ENCODE measurements at regions of chr12 and their contacts with region 1.

Region 1: GRCh38 chr12:21501379-21501956 is at the starts of genes GOLT1B and RECQL:
- DNase-seq: peak; percentile 98
- H3K4me3 ChIP-seq: peak within 1 kb of the TSS; percentile 84 to 92 (median 88)
- H3K27ac ChIP-seq: peak within 1 kb of the TSS; percentile 84 to 89 (median 85)
- H3K4me1 ChIP-seq: peaks cover 0 to 45% (median 38%) of the 10 kb centered on the region in 4 donors
- H3K27me3 ChIP-seq: no peaks in the 10 kb centered on the region
- CTCF ChIP-seq: no peak
- EP300 ChIP-seq: no peak
- POLR2A ChIP-seq: peak in 1 of 2 donors; percentile 24
- total RNA-seq, gene GOLT1B: 22.5 to 26.9 (median 25.3) TPM
- total RNA-seq, gene RECQL: 30.8 to 44.6 (median 37.1) TPM

Region 2: DNA sequence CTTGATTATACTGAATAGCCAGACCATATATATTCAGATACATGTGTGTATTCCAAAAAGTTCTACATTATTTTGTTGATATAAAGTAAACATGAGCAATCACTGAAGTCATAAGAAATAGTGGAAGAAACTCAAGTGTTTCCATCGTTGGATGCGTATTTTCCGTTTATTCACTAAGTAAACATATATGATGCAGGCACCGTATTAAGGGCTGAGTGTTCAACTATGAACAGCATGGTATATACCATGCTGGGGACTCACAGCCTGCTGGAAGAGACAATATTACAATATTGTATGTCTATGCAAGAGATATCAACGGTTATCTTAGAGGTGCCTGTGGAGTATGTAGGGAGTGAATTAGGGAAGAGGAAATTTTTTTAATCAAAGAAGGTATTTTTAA is 62.8 kb before region 1 on chr12:
- intact Hi-C with region 1: loop called (anchors 5 kb)
- DNase-seq: no peak
- H3K4me3 ChIP-seq: peak overlapping the region; percentile 63 to 69 (median 64)
- H3K27ac ChIP-seq: peak overlapping the region in 3 of 4 donors; percentile 83 to 85 (median 84)
- H3K4me1 ChIP-seq: peaks cover 0 to 16% (median 7%) of the 10 kb centered on the region in 4 donors
- H3K27me3 ChIP-seq: no peaks in the 10 kb centered on the region
- CTCF ChIP-seq: no peak
- EP300 ChIP-seq: no peak
- POLR2A ChIP-seq: no peak

Region 3: DNA sequence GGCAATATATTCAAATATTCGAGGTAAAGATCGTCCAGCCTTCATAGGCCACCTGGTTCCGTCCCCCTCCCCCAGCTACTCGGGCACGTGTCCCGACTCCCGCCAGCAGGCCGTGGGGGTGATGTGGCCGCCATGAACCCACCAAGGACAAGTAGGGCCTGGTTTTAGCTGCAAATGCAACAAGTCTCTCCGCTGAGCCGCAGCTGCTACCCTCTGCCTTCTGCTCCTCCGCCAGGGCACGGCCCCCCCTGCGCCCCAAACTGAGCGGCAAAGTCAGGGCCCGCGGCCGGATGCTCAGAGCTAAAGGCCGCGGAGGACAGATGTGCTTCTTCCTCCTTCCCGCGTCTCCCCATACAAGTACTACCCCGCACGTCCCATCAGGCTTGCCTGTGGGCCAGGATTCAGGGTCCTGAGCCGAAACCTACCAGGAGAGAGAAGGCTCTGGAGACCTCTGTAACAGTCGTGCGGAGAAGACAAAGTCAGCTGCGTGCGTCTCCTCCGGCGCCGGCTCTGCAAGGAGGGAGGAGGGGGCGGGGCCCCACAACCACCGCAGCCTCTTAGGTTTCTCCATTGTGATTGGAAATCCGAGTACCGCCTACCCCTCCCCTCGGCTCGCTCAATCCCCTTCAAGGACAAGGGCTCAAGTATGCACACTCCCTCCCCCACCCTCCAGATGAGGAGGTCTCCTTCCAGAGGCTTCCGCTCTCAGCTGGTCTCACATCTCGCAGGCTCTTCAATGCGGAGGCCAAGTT is 156.0 kb after region 1 on chr12 and contains the start of gene LDHB:
- intact Hi-C with region 1: loop called (anchors 5 kb)
- DNase-seq: peak; percentile 99
- H3K4me3 ChIP-seq: peak within 1 kb of the TSS; percentile 69 to 88 (median 78)
- H3K27ac ChIP-seq: peak within 1 kb of the TSS; percentile 94 to 97 (median 95)
- H3K4me1 ChIP-seq: peaks cover 0 to 36% (median 9%) of the 10 kb centered on the region in 4 donors
- H3K27me3 ChIP-seq: no peaks in the 10 kb centered on the region
- CTCF ChIP-seq: no peak
- EP300 ChIP-seq: no peak
- POLR2A ChIP-seq: peak; percentile 97 to 98
- total RNA-seq, gene LDHB: 355 to 424 (median 379) TPM

Region 4: DNA sequence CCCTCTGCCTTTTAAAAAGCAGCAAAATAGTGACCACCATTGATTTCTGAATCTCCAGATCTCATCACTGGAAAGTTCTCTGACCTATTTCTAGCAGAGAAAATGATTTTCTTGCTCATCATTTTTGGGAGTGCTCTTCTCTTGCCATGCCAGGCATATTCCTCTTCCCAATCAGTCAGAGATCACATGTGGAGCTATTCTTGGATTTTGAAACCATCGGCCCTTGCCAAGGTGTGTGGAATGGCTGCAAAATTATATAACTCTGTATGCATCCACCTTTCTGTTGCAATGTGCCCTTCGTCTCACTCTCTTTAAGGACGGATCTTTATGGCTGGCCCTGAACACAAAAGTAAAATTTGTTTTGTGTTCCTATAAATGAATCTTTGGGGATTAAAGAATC is 181.6 kb after region 1 on chr12:
- intact Hi-C with region 1: loop called (anchors 5 kb)
- DNase-seq: no peak
- H3K4me3 ChIP-seq: no peak overlapping the region
- H3K27ac ChIP-seq: no peak overlapping the region
- H3K4me1 ChIP-seq: peaks cover 0 to 6% (median 3%) of the 10 kb centered on the region in 4 donors
- H3K27me3 ChIP-seq: no peaks in the 10 kb centered on the region
- CTCF ChIP-seq: no peak
- EP300 ChIP-seq: no peak
- POLR2A ChIP-seq: no peak

Region 5: DNA sequence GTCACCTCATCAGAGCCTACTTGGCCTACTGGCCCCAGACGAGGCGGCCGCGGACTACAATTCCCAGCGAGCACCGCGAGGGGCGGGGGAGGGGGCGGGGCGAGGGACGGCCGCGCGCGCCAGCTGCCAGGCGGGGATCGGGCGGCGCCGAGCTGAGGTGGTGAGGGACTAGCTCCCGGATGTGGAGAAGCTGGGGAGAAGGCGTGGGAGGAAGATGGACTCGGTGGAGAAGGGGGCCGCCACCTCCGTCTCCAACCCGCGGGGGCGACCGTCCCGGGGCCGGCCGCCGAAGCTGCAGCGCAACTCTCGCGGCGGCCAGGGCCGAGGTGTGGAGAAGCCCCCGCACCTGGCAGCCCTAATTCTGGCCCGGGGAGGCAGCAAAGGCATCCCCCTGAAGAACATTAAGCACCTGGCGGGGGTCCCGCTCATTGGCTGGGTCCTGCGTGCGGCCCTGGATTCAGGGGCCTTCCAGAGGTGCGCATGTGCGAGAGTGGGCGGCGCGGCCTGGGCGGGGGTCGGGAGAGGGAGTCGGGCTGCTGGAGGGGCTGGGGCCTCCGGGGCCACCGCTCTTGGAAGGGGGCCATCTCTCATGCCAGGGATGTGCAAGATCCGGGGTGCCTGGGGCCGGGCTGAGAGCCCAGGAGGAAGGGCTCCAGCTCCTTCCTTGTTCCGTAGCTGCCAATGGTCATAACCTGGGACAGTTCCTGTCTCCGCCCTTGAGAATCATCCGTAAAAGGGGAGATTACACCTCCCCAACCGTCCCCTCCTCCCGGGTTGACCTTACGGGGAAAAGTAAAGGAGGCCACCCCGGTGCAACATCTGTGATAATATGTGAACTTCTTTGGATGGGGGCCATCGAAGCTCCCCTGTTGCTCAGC is 544.9 kb after region 1 on chr12 and contains the start of gene CMAS:
- intact Hi-C with region 1: loop called (anchors 10 kb)
- DNase-seq: peak; percentile 89
- H3K4me3 ChIP-seq: peak within 1 kb of the TSS; percentile 91 to 98 (median 98)
- H3K27ac ChIP-seq: peak within 1 kb of the TSS; percentile 89 to 93 (median 90)
- H3K4me1 ChIP-seq: peaks cover 0 to 30% (median 25%) of the 10 kb centered on the region in 4 donors
- H3K27me3 ChIP-seq: no peaks in the 10 kb centered on the region
- CTCF ChIP-seq: no peak
- EP300 ChIP-seq: no peak
- POLR2A ChIP-seq: peak; percentile 36 to 76
- total RNA-seq, gene CMAS: 23.3 to 35.1 (median 30.1) TPM

Measured in sigmoid colon (tissue), 7 donors.